Vagina (tissue), 2 donors: ENCODE measurements at regions of chr14 and their contacts with region 1.

Region 1: GRCh38 chr14:61103481-61104339 is 122.7 kb downstream of the SLC38A6 start:
- DNase-seq: no peak
- H3K4me3 ChIP-seq: peak overlapping the region in 1 of 2 donors; percentile 23
- H3K27ac ChIP-seq: peak overlapping the region; percentile 78
- H3K4me1 ChIP-seq: peaks cover 53% of the 10 kb centered on the region
- H3K27me3 ChIP-seq: no peaks in the 10 kb centered on the region
- CTCF ChIP-seq: no peak
- POLR2A ChIP-seq: no peak

Region 2: GRCh38 chr14:61797309-61797708 is 693.6 kb after region 1 on chr14:
- intact Hi-C with region 1: loop called (anchors 5 kb)
- DNase-seq: no peak
- H3K4me3 ChIP-seq: no peak overlapping the region
- H3K27ac ChIP-seq: no peak overlapping the region
- H3K4me1 ChIP-seq: peaks cover 10% of the 10 kb centered on the region
- H3K27me3 ChIP-seq: no peaks in the 10 kb centered on the region
- CTCF ChIP-seq: no peak
- POLR2A ChIP-seq: no peak